Mammary epithelial cell (primary cell): ENCODE measurements at regions of chr19 and their contacts with region 1.

Region 1: GRCh38 chr19:28596561-28597071 is 616.3 kb downstream of the UQCRFS1 start:
- DNase-seq: no peak
- H3K4me3 ChIP-seq: no peak overlapping the region
- H3K27ac ChIP-seq: no peak overlapping the region
- H3K4me1 ChIP-seq: no peaks in the 10 kb centered on the region
- H3K27me3 ChIP-seq: no peaks in the 10 kb centered on the region
- CTCF ChIP-seq: no peak

Region 2: DNA sequence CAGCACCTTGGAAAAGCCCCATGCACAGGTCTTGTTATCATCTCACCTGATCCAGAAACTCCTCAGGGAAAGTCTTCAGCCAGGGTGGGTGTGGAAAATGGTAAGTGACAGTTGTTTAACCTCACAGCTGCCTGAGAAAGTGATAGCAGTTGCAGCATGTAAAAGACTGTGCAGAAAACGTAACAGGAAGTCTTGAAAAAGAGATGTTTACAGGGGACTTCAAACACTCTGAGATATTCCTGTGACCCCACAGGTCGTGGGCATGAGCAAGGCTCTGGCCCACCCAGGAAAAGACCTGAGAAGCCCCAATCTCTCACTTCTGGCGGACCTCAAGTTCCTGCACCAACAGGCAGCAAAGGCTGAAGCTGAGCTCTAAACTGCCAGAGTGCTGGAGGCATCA is 210.6 kb before region 1 on chr19:
- CTCF ChIA-PET with region 1: no interaction called
- dilution Hi-C with region 1: no loop called
- in situ Hi-C with region 1: no loop called
- intact Hi-C with region 1: no loop called
- DNase-seq: no peak
- H3K4me3 ChIP-seq: no peak overlapping the region
- H3K27ac ChIP-seq: no peak overlapping the region
- H3K4me1 ChIP-seq: no peaks in the 10 kb centered on the region
- H3K27me3 ChIP-seq: no peaks in the 10 kb centered on the region
- CTCF ChIP-seq: no peak

Region 3: DNA sequence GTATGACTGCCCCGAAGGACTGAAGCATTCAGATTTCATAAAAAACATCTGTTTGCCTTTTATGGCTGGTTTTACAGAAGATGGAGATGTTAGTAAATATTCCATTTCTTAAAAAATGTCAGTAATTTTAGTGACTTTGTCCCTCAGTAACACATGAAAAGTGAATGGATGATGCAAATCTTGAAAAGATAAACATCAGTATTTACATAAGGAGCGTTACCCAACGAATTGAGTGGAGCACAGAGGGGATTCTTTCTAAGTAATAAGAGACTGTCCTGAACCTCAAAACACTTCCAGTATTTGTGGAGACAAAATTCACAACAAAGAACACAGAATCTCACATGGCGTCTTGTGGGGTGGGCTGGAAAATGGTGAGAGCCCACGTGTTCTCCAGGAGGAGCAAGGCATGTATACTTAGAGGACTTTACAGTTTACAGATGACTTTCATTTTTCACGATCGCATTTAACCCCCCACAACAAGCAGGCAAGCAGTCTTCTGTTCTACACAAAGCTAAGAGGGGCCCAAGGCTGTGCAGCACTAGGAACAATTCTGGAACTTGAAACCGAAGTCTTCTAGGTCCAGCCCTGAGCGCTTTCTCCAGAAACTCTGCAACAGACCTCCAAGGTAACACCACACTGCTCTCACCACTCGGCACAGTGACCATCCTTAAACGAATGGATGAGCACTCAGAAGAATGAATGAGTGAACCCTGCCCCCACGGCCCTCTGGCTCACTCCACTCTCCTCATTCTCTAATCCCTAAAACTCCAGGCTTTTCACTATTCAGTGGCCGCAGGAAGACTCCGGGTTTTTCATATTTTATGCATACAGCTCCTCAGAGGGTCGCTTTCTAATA is 93.5 kb before region 1 on chr19:
- CTCF ChIA-PET with region 1: no interaction called
- dilution Hi-C with region 1: no loop called
- in situ Hi-C with region 1: no loop called
- intact Hi-C with region 1: loop called (anchors 1 kb)
- DNase-seq: no peak
- H3K4me3 ChIP-seq: no peak overlapping the region
- H3K27ac ChIP-seq: no peak overlapping the region
- H3K4me1 ChIP-seq: no peaks in the 10 kb centered on the region
- H3K27me3 ChIP-seq: no peaks in the 10 kb centered on the region
- CTCF ChIP-seq: no peak

Region 4: DNA sequence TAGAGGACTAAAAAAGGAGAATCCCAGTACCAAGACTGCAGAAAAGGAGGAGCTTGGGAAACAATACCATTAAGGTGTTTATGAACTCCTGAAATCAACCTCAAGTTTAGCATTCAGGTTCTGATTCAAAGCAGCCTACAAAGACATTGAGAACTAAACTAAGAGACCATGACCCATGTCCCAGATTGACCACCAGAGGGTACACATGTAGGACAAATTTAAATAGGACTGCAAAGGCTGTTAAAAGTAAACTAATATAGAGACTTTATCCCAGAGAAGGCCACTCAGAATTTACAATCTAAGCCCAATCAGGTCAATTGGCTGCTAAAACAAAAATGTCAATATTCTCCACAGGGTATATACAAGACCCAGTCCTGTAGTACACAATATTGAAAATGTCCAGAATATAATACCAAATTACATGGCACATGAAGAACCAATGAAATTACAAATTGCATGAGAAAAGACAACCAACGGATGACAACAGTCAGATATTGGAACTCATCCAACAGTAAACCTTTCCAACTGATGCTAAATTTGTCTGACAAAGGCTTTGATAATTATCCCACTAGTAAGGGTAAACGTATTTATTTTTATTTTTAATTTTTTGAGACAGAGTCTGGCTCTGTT is 66.1 kb before region 1 on chr19:
- CTCF ChIA-PET with region 1: no interaction called
- dilution Hi-C with region 1: no loop called
- in situ Hi-C with region 1: no loop called
- intact Hi-C with region 1: no loop called
- DNase-seq: no peak
- H3K4me3 ChIP-seq: no peak overlapping the region
- H3K27ac ChIP-seq: no peak overlapping the region
- H3K4me1 ChIP-seq: no peaks in the 10 kb centered on the region
- H3K27me3 ChIP-seq: no peaks in the 10 kb centered on the region
- CTCF ChIP-seq: no peak